Calu3 (cell line): ENCODE measurements at regions of chr2 and their contacts with region 1.

Region 1: GRCh38 chr2:151409601-151410484 is at the start of gene RIF1:
- DNase-seq: peak; percentile 95
- H3K4me3 Mint-ChIP-seq: peak within 1 kb of the TSS; percentile 98
- H3K27ac Mint-ChIP-seq: peak within 1 kb of the TSS; percentile 93
- H3K4me1 Mint-ChIP-seq: peaks cover 16% of the 10 kb centered on the region
- H3K27me3 Mint-ChIP-seq: no peaks in the 10 kb centered on the region
- CTCF ChIP-seq: peak; percentile 64
- total RNA-seq, gene RIF1: 75.7 and 78.1 TPM in 2 replicates

Region 2: DNA sequence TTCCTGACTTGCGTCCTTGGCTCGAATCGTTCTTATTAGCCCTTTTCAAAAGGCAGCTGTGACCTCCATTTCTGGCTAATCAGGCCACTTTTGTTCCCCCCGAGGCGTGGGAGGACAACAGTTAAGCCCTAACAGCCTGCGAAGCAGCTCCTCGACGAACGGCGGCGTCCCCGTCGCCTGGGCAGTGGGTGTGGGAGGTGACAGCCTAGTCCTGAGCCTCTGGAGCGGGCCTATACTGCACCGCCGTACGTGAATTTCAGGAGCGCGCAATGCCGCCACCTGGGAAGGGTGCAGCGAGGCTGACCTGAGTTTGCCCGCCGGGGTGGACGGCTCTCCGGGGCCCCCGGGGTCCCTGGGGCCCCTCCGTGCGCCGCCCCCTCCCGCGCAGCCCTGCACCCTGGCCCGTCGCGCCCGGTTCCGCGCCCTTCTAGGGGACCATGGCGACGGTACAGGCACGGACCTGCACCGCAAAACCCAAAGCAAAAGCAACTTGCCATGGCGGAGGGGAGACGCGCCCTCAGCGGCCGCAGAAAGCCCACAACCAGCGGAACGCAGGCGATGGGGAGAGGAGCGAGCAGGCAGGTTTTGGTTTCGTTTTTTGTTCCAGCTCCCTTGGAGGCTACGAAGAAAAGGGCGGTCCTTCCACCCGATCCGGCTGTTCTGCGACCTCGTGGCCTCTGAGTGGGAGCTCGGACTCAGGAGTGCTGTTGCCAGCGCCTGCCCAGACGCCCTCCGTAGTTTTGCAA is 148.4 kb before region 1 on chr2 and contains the start of gene RBM43:
- CTCF ChIA-PET with region 1: no interaction called
- intact Hi-C with region 1: loop called (anchors 5 kb)
- DNase-seq: peak; percentile 79
- H3K4me3 Mint-ChIP-seq: peak within 1 kb of the TSS; percentile 76
- H3K27ac Mint-ChIP-seq: peak within 1 kb of the TSS; percentile 56
- H3K4me1 Mint-ChIP-seq: peaks cover 14% of the 10 kb centered on the region
- H3K27me3 Mint-ChIP-seq: no peaks in the 10 kb centered on the region
- CTCF ChIP-seq: no peak
- total RNA-seq, gene RBM43: 5.2 and 6.1 TPM in 2 replicates

Region 3: GRCh38 chr2:151289369-151290088 is 120.3 kb before region 1 on chr2 and contains the start of gene NMI:
- CTCF ChIA-PET with region 1: interaction called, 11 read pairs
- intact Hi-C with region 1: loop called (anchors 2 kb)
- DNase-seq: peak; percentile 70
- H3K4me3 Mint-ChIP-seq: peak within 1 kb of the TSS; percentile 74
- H3K27ac Mint-ChIP-seq: peak within 1 kb of the TSS; percentile 93
- H3K4me1 Mint-ChIP-seq: peaks cover 23% of the 10 kb centered on the region
- H3K27me3 Mint-ChIP-seq: no peaks in the 10 kb centered on the region
- CTCF ChIP-seq: no peak
- total RNA-seq, gene NMI: 30.1 and 41.3 TPM in 2 replicates

Region 4: DNA sequence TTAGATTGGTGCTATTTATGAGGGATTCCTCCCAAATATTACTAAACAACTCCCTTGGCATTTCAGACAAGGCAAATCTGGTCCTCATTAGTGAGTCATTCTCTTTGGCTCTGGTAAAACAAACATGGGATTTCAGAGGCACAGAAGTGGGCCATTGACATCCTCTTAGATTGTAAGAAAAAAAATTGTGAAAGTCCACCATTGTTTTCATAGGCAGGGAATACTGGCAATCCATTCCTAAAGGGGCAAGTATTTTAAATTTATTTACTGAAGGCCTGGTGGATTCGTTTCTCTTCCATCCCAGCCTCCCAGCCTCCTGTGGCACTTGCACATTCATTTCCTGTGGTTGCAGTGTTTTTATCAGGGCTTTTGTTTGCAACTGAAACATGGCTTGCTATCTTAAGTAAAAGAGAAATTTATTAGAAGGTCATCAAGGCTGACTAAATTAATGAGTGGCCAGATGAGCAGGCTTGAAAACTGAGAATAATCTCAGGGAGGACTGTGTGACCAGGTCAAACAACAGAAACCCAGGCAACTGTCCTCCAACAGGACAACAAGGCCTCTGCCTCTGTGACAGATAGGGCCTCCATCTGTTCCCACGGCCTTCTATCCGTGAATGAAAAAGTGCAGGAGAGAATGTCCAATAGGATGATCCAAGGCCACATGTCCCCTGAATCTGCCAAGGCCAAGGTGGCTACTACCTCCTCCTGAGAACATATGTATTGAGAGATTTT is 75.6 kb before region 1 on chr2:
- CTCF ChIA-PET with region 1: interaction called, 7 read pairs
- intact Hi-C with region 1: loop called (anchors 10 kb)
- DNase-seq: peak; percentile 15
- H3K4me3 Mint-ChIP-seq: no peak overlapping the region
- H3K27ac Mint-ChIP-seq: peak overlapping the region; percentile 27
- H3K4me1 Mint-ChIP-seq: peaks cover 36% of the 10 kb centered on the region
- H3K27me3 Mint-ChIP-seq: no peaks in the 10 kb centered on the region
- CTCF ChIP-seq: no peak

Region 5: DNA sequence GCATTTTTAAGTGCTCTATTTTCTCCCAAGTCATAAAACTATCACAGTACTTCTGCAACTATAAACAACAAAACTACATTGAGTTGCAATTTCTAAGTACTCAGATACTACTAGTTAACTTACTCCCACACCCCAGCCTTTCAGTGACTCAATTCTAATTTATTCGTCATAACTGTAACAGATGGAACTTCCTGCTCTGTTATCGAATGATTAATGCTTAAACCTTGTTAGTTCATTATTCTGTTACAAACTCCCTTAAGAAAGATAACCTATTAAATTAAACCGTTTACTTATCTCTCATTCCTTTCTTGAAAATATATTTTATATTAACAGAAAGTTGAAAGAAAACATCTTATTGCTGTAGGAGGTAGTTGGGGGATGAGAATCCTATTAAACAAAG is 35.4 kb before region 1 on chr2:
- CTCF ChIA-PET with region 1: no interaction called
- intact Hi-C with region 1: loop called (anchors 5 kb)
- DNase-seq: peak; percentile 24
- H3K4me3 Mint-ChIP-seq: peak overlapping the region; percentile 14
- H3K27ac Mint-ChIP-seq: peak overlapping the region; percentile 81
- H3K4me1 Mint-ChIP-seq: peaks cover 15% of the 10 kb centered on the region
- H3K27me3 Mint-ChIP-seq: no peaks in the 10 kb centered on the region
- CTCF ChIP-seq: no peak

Region 6: GRCh38 chr2:151422917-151423439 is 13.1 kb after region 1 on chr2:
- CTCF ChIA-PET with region 1: no interaction called
- intact Hi-C with region 1: no loop called
- DNase-seq: no peak
- H3K4me3 Mint-ChIP-seq: no peak overlapping the region
- H3K27ac Mint-ChIP-seq: no peak overlapping the region
- H3K4me1 Mint-ChIP-seq: peaks cover 10% of the 10 kb centered on the region
- H3K27me3 Mint-ChIP-seq: no peaks in the 10 kb centered on the region
- CTCF ChIP-seq: no peak

Region 7: DNA sequence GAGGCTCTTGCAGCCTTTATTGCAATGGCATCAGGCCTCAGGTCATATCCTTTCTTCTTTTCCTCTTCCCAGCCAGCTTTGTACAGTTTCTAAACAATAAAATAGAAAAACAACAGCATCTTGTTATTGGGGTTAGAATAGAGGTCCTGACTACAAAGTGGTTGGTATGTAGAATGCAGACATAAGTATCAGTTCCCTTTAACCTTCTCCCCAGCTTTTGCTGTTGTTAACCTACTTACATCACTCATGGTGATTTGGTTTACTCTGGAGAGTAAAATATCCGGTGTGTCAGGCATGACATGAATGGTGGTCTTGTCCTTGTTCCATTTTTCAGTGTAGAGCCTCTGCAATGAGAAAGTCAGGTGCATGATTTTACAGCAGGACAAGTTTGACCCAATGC is 254.7 kb after region 1 on chr2:
- CTCF ChIA-PET with region 1: no interaction called
- intact Hi-C with region 1: no loop called
- DNase-seq: no peak
- H3K4me3 Mint-ChIP-seq: no peak overlapping the region
- H3K27ac Mint-ChIP-seq: no peak overlapping the region
- H3K4me1 Mint-ChIP-seq: peaks cover 6% of the 10 kb centered on the region
- H3K27me3 Mint-ChIP-seq: no peaks in the 10 kb centered on the region
- CTCF ChIP-seq: no peak